ENCODE measurements at regions of chr14 and their contacts with region 1.

Region 1: GRCh38 chr14:22829661-22830442 is at the start of gene MRPL52:
- DNase-seq: peak; percentile 91 to 94 (median 92)
- ATAC-seq: peak; percentile 88 to 98 (median 98)
- H3K4me3 ChIP-seq: peak within 1 kb of the TSS; percentile 66 to 93 (median 78)
- H3K27ac ChIP-seq: peak within 1 kb of the TSS; percentile 53 to 87 (median 80)
- H3K4me1 ChIP-seq: peaks cover 0 to 17% (median 11%) of the 10 kb centered on the region in 12 donors
- H3K27me3 ChIP-seq: no peaks in the 10 kb centered on the region
- CTCF ChIP-seq: no peak
- POLR2A ChIP-seq: peak in 1 of 2 donors; percentile 20
- total RNA-seq, gene MRPL52: 80.4 to 185 (median 107) TPM

Region 2: GRCh38 chr14:22653012-22653621 is 176.7 kb before region 1 on chr14:
- intact Hi-C with region 1: loop called in 1 of 10 experiments (anchors 10 kb)
- DNase-seq: peak in 4 of 5 donors; percentile 31 to 53 (median 48)
- ATAC-seq: peak in 3 of 4 donors; percentile 81 to 89 (median 86)
- H3K4me3 ChIP-seq: no peak overlapping the region
- H3K27ac ChIP-seq: no peak overlapping the region
- H3K4me1 ChIP-seq: peaks cover 0 to 2% (median 0%) of the 10 kb centered on the region in 12 donors
- H3K27me3 ChIP-seq: no peaks in the 10 kb centered on the region
- CTCF ChIP-seq: peak; percentile 65 to 80 (median 70)
- POLR2A ChIP-seq: no peak

Region 3: GRCh38 chr14:22900081-22900799 is 70.4 kb after region 1 on chr14:
- intact Hi-C with region 1: loop called in 1 of 10 experiments (anchors 10 kb)
- DNase-seq: no peak
- ATAC-seq: peak; percentile 29 to 69 (median 54)
- H3K4me3 ChIP-seq: no peak overlapping the region
- H3K27ac ChIP-seq: peak overlapping the region in 1 of 12 donors; percentile 72
- H3K4me1 ChIP-seq: peaks cover 0 to 10% (median 5%) of the 10 kb centered on the region in 12 donors
- H3K27me3 ChIP-seq: no peaks in the 10 kb centered on the region
- CTCF ChIP-seq: peak in 11 of 12 donors; percentile 28 to 64 (median 49)
- POLR2A ChIP-seq: no peak

Region 4: DNA sequence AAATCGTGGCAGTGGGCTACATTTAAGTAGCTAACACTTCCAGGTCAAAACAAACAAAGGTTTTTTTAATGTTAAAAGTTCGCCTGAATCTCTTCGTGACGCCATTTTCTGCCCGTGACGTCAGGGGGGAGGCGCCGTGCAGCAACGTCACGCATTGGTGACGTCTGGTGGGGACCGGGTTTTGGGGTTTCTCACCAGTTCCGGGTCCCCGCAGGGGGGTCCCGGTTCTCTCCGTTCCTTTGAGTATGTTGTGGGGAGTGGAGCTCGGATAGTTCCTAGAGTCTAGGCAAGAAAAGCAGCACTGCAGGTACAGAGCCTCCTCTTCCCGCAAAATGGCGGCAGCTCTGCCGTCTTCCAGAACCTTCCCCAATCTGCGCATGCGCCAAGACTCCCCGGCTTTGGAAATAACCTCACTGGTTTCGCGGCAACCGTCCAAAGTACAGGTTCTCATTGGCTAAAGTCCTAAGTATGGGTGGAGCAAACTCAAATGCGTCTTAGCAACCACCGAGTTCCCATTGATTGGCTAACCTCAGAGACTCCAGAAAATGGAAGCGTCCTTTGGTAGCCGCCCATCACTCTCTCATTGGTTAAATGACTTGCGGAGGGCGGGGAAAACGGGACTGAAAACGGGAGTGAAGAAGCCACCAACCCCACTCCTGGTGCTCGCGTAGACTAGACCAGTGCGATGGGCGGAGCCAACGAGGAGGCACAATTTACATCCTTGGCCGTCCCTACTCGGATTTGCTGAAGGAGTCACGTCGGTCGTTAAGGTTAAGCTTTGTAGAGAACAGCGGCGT is 89.2 kb after region 1 on chr14 and contains the start of gene RBM23:
- intact Hi-C with region 1: loop called in 1 of 10 experiments (anchors 10 kb)
- DNase-seq: peak; percentile 100
- ATAC-seq: peak; percentile 92 to 96 (median 94)
- H3K4me3 ChIP-seq: peak within 1 kb of the TSS; percentile 55 to 94 (median 75)
- H3K27ac ChIP-seq: peak within 1 kb of the TSS; percentile 87 to 100 (median 95)
- H3K4me1 ChIP-seq: peaks cover 0 to 55% (median 24%) of the 10 kb centered on the region in 12 donors
- H3K27me3 ChIP-seq: no peaks in the 10 kb centered on the region
- CTCF ChIP-seq: no peak
- POLR2A ChIP-seq: peak; percentile 72 to 83
- total RNA-seq, gene RBM23: 35.4 to 45.0 (median 41.6) TPM

Measured in heart left ventricle (tissue), 16 donors.